Sigmoid colon (tissue), 7 donors: ENCODE measurements at regions of chr15 and their contacts with region 1.

Region 1: DNA sequence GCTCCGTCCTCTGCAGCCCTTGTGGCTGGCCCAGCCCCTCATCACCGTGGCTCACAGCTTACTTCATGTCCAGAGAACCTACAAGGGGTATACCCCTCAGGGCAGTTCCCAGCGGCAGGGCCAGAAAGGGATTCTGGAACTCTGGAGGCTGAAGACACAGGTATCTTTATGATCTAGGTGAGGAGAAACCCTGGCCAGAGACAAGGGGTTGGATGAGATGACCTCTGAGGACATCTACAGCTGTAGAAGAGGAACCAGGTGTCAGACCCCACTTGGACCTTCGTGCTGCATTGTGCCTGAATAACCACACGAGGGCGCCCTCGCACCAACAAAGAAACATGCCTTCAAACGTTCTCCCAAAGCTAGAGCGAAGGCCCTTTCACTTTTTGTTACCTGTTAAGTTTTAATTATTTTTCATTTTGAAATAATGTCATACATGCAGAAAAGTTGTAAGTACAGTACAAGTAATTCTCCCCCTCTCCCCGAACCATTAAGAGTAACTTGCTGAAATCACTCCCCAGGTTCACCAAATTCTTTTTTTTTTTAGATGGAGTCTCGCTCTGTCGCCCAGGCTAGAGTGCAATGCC is 118.7 kb upstream of the SMAD3 start:
- DNase-seq: peak; percentile 75
- H3K4me3 ChIP-seq: no peak overlapping the region
- H3K27ac ChIP-seq: no peak overlapping the region
- H3K4me1 ChIP-seq: peaks cover 0 to under 1% (median 0%) of the 10 kb centered on the region in 4 donors
- H3K27me3 ChIP-seq: no peaks in the 10 kb centered on the region
- CTCF ChIP-seq: peak; percentile 87 to 93 (median 92)
- EP300 ChIP-seq: no peak
- POLR2A ChIP-seq: no peak

Region 2: GRCh38 chr15:67305506-67305905 is 358.8 kb after region 1 on chr15:
- intact Hi-C with region 1: loop called (anchors 1 kb)
- DNase-seq: no peak
- H3K4me3 ChIP-seq: no peak overlapping the region
- H3K27ac ChIP-seq: no peak overlapping the region
- H3K4me1 ChIP-seq: peaks cover 0 to 15% (median 5%) of the 10 kb centered on the region in 4 donors
- H3K27me3 ChIP-seq: no peaks in the 10 kb centered on the region
- CTCF ChIP-seq: no peak
- EP300 ChIP-seq: no peak
- POLR2A ChIP-seq: no peak

Region 3: DNA sequence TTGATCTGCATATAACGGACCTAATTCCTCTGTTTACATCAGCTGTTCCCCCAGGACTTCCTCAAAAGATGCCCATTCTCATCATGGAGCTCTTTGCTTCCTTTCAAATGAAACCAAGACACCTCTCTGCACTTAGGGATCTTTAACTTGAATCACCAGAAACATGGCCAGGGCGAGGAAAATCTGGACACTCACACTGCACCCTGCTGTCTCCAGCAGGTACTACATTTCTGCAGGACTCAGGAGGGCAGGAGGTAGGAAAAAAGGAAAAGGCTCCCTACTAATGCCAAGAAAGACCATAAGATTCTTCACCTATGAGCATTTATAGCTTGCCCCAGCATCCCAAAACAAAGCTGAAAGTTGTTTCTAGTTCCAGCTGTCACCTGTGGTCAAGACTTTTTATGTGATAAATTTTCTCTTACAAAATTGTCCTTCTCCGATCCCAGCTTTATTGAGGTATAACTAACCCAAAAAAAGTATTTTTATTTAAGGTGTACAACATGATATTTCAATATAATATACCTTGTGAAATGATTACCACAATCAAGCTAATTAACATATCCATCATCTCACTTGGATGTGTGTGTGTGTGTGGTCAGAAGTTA is 486.9 kb after region 1 on chr15:
- intact Hi-C with region 1: loop called (anchors 1 kb)
- DNase-seq: peak; percentile 69
- H3K4me3 ChIP-seq: no peak overlapping the region
- H3K27ac ChIP-seq: no peak overlapping the region
- H3K4me1 ChIP-seq: no peaks in the 10 kb centered on the region
- H3K27me3 ChIP-seq: no peaks in the 10 kb centered on the region
- CTCF ChIP-seq: peak; percentile 30 to 69 (median 60)
- EP300 ChIP-seq: no peak
- POLR2A ChIP-seq: no peak